Activated T-helper 2 cell treated with anti-CD3 and anti-CD28 coated beads, Interferon-gamma antibody, Interleukin-2, Interleukin-4, amounts not matched to agents 10 μg/mL and 5 μg/mL and 100 μg/mL, durations not matched to agents 14 hours and 24 hours and 36 hours (primary cell): ENCODE measurements at regions of chr6 and their contacts with region 1.

Region 1: GRCh38 chr6:26097268-26097875 is 10.1 kb downstream of the HFE start:
- DNase-seq: peak; percentile 48
- H3K4me3 Mint-ChIP-seq: no peak overlapping the region
- H3K27ac Mint-ChIP-seq: no peak overlapping the region
- H3K4me1 Mint-ChIP-seq: peaks cover 9% of the 10 kb centered on the region
- H3K27me3 Mint-ChIP-seq: peaks cover 21% of the 10 kb centered on the region

Region 2: DNA sequence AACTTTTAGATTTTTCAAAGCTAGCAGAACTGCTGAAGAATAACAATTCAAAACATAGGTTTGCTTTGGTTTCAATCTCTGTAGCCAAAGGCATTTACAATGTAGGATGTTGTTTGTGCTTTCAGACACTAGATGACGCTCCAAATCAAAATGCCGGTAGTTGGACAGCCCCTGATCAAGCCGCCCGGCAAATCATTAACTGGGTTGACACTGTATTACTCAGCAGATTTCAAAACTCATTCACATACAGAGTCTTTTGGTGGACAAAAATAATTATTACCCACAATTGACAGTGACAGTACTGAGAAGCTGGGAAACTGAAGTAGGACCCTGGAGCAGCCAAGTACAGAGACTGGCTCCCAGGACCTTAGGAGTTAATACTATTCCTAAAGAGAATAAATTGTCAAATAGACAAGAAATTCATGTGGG is 31.4 kb before region 1 on chr6:
- intact Hi-C with region 1: loop called (anchors 1 kb)
- DNase-seq: peak; percentile 49
- H3K4me3 Mint-ChIP-seq: no peak overlapping the region
- H3K27ac Mint-ChIP-seq: no peak overlapping the region
- H3K4me1 Mint-ChIP-seq: peaks cover 7% of the 10 kb centered on the region
- H3K27me3 Mint-ChIP-seq: peaks cover 31% of the 10 kb centered on the region

Region 3: GRCh38 chr6:26454631-26455030 is 357.3 kb after region 1 on chr6:
- intact Hi-C with region 1: no loop called
- DNase-seq: no peak
- H3K4me3 Mint-ChIP-seq: no peak overlapping the region
- H3K27ac Mint-ChIP-seq: no peak overlapping the region
- H3K4me1 Mint-ChIP-seq: peaks cover 17% of the 10 kb centered on the region
- H3K27me3 Mint-ChIP-seq: no peaks in the 10 kb centered on the region